Activated T-helper 2 cell treated with anti-CD3 and anti-CD28 coated beads, Interferon-gamma antibody, Interleukin-2, Interleukin-4, amounts not matched to agents 10 μg/mL and 5 μg/mL and 100 μg/mL, durations not matched to agents 14 hours and 24 hours and 36 hours (primary cell): ENCODE measurements at regions of chr4 and their contacts with region 1.

Region 1: DNA sequence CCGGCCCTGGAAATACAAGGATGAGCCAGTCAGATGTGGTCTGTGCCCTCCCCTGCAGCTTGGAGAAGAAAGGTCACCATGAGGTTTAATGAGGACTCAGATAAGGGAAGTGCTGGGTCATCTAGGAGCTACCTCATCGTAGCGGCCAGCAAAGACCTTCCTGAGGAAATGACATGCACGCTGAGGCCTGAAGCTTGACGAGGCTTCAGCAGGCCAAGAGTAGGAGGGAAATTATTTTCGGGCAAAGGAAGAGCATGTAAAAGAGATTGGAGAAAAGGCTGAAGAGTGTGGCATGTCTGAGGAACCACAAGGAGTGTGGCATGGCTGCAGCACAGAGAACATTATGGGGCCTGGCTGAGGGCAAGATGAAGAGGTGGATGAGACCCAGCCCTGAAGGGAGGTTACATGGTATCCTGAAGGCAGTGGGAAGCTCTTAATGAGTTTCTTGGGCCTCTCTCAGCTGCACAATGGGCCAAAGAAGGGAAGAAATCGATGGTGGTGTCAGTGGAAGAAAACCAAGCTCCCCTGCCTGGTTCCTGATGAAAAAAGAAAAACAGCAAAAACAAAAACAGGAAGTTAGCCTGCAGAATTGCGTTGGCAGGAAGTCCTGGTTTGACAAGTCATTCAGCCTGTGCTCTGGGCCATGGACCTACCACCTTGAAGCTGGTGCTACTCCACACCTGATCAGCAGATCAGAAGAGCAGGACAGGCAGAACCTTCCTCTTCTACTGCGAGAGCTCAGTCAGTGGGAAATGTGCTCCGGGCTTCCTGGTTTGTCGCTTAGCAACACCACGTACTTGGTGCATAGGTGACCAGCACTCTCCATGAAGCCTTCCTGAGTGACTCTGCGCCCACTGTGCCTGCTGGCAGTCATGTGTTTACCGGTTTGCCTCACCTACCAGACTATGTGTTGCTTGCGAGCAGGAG is 134.5 kb upstream of the KLF3 start:
- DNase-seq: peak; percentile 12
- H3K4me3 Mint-ChIP-seq: no peak overlapping the region
- H3K27ac Mint-ChIP-seq: peak overlapping the region; percentile 82
- H3K4me1 Mint-ChIP-seq: peaks cover 17% of the 10 kb centered on the region
- H3K27me3 Mint-ChIP-seq: peaks cover 10% of the 10 kb centered on the region

Region 2: GRCh38 chr4:38160487-38161207 is 368.8 kb before region 1 on chr4:
- intact Hi-C with region 1: loop called (anchors 10 kb)
- DNase-seq: peak; percentile 48
- H3K4me3 Mint-ChIP-seq: no peak overlapping the region
- H3K27ac Mint-ChIP-seq: peak overlapping the region; percentile 58
- H3K4me1 Mint-ChIP-seq: peaks cover 29% of the 10 kb centered on the region
- H3K27me3 Mint-ChIP-seq: peaks cover 15% of the 10 kb centered on the region